Astrocyte of the cerebellum (primary cell): ENCODE measurements at regions of chr7 and their contacts with region 1.

Region 1: GRCh38 chr7:131518626-131519025 is 37.8 kb downstream of the PODXL start:
- DNase-seq: no peak
- H3K4me3 ChIP-seq: no peak overlapping the region
- CTCF ChIP-seq: no peak

Region 2: DNA sequence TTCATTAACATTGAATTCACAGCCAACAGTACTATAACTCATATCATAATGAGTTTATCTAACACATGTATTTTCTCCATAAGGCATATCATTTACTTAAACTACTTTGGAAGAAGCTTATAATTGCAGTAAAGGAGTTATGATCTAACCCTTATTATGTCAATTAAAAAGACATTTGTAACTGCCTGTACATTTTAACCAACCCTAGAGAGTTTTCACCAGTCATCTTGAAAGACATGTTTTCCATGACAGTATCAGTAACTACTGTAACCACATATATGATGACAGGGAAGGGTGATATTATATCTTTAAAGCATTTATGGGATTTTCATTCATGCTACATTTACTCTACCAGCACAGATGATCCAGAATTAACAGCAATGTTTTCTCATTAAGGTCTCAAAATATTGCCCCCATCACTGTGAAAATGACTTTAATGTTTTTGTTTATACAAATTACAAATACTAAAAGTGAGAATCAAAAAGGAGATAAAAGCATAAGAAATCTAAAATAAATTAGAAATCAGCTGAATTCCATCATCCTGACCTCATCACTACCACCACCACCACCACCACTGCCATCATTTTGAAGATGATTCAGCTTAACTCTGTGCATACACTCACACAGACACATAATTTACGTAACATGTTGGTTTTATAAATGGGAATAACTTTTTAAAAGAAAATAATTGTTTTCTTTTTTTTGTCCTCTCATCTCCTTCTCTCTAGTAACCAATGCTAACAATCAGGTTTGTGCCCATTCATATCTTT is 137.4 kb before region 1 on chr7:
- in situ Hi-C with region 1: no loop called
- DNase-seq: no peak
- H3K4me3 ChIP-seq: no peak overlapping the region
- CTCF ChIP-seq: no peak

Region 3: DNA sequence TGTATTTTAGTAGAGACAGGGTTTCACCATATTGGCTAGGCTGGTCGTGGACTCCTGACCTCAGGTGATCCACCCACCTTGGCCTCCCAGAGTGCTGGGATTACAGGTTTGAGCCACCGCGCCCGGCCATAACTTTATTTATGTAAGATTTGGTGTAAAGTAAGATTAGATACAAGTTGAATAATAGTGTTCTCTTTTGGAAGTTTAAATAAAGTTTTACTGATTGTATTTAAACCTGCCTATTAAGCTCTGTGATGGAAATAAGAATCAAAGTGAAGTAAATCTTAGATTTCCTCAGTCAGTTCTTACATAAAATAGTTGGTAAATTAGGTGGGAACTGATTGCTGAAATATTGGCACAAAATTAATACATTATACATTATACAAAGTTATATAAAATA is 104.9 kb before region 1 on chr7:
- in situ Hi-C with region 1: no loop called
- DNase-seq: no peak
- H3K4me3 ChIP-seq: no peak overlapping the region
- CTCF ChIP-seq: no peak

Region 4: DNA sequence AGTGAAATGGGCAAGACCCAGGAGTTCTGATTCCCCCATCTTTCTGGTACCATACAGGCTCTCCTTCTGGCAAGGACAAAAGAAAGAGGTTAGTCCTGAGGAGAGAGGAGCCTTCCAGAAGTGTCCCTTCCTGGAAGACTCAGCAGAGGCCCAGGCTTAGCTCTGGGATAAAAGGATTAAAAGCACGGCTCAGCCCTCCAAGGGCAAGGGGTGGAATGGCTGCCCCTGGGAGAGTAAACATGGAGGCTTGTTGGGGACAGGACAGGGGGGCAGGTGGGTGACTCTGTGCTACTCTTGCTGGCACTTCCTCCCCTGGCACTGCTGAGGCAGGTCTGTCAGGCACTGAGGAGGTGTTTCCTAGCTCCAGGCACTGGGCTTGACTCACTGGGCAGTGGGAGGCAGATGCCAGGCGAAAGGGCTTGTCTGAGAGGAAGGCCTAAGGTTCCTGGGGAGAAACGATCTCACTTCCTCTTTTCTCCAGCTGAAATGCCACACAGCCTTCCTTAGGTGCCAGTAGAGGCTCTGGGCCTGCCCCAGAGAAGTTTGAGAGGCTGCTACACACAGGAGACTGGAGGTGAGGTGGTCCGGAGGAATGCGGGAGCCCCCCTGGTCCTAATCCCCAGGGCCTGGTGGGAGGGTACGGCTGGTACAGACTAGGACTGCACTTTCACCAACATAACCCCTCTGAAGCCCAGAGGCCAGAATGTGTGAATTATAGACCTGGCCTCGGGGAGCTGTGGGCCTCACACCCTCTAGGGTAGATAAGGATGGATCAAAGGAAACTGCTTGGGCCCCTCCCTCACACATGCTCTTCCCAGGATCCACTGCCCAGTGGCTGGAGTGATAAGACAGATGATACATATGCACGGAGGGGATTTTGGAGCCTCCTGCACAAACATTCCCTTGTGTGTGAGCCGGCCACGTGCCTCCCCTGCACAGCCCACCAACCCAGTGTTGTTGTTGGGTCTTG is 101.0 kb after region 1 on chr7:
- in situ Hi-C with region 1: loop called (anchors 5 kb)
- DNase-seq: peak; percentile 16
- H3K4me3 ChIP-seq: no peak overlapping the region
- CTCF ChIP-seq: no peak